Activated CD4-positive, alpha-beta T cell treated with anti-CD3 and anti-CD28 coated beads, Interleukin-2, amount 10 ng/mL, durations not matched to agents 24 days and 14 days (primary cell): ENCODE measurements at regions of chr10 and their contacts with region 1.

Region 1: DNA sequence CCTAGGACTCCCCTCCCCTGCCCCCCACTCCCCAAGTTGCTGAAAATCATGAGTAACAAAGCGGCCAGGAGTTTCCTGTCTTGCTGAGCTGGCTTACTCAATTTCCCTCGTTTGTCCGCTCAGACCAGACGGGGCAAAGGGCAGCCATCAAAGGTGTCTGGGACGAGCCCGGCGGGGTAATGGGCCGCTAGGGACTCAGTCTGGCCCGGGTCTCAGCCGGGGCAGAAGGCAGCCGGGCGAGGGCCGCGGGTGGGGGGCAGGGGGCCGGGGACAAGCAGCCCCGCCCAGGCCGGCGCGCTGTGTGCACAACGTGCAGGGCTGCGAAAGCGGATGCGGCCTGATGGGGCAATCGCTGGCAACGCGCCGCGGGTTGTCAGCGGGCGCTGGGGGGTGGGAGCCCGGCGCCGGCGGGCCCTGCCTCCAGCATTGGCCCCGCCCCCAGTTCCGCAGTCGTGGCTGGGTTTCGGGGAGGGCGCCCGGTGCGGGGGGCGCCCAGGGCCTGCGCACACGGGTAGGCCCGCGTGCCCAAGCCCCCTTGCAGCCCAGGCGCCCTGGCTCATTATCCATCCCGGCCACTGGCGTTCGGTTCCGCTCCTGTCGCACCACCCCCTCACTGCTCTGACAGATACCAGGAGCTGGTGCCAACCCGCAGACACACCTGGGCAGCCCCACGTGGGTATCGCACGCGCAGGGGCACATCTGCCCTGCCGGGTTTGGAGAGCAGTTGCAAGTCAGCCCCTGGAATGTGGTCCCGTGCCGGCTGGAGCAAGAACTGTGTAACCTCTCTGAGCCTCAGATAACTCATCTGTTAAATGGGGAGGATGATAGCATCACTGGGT is 35.1 kb downstream of the DNAJB12 start:
- DNase-seq: peak; percentile 96
- H3K4me3 Mint-ChIP-seq: peak overlapping the region; percentile 85
- H3K27ac Mint-ChIP-seq: peak overlapping the region; percentile 99
- H3K4me1 Mint-ChIP-seq: peaks cover 61% of the 10 kb centered on the region
- H3K27me3 Mint-ChIP-seq: no peaks in the 10 kb centered on the region

Region 2: GRCh38 chr10:71888623-71889387 is 430.8 kb before region 1 on chr10:
- intact Hi-C with region 1: no loop called
- DNase-seq: peak; percentile 90
- H3K4me3 Mint-ChIP-seq: peak overlapping the region; percentile 88
- H3K27ac Mint-ChIP-seq: peak overlapping the region; percentile 76
- H3K4me1 Mint-ChIP-seq: peaks cover 10% of the 10 kb centered on the region
- H3K27me3 Mint-ChIP-seq: peaks cover 15% of the 10 kb centered on the region

Region 3: DNA sequence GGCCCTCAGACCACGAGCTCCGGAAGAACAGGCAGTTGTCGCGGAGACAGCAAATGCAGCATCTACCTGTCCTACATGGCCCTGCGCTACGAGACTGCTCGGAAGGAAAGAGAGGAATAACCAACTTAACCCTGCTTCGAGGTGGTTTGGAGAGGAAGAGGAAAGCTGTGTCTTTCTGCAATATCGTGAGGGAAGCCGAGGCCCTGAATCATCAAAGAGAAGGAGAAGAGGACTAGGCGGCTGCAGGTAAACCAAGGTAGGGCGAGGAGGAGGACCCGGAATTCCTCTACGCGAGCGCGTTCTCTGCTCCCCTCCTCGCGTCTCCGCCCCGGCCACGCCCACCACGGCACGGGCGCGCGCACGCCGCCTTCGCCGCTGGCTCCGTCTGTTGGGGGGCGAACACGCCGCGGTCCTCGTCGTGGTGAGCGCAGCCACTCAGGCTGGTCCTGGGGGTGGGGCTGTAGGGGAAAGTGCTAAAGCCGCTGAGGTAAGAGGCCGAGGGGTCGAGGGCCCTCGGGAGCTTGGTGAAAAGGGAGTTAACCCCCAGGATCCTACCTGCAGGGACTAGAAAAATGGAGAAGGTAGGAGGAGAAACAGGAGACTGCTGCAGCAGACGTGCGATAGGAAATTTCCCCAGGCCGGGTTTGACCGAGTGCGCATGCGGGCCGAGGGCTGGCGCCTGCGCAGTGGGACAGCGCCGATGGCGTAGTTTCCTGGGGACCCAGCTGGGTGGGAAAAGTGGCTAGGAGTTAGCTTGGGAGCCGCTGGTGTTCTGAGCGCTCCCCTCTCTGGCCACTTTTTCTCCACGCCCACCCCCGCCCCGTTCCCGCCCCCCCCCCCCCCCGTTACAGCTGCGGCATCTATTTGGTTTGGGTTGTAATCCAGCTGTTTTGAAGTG is 103.7 kb before region 1 on chr10 and contains the starts of genes ANAPC16 and ASCC1:
- intact Hi-C with region 1: loop called (anchors 5 kb)
- DNase-seq: peak; percentile 99
- H3K4me3 Mint-ChIP-seq: peak within 1 kb of the TSS; percentile 96
- H3K27ac Mint-ChIP-seq: peak within 1 kb of the TSS; percentile 100
- H3K4me1 Mint-ChIP-seq: peaks cover 30% of the 10 kb centered on the region
- H3K27me3 Mint-ChIP-seq: peaks cover 1% of the 10 kb centered on the region
- total RNA-seq, gene ANAPC16: 73.2 and 74.3 TPM in 2 replicates
- total RNA-seq, gene ASCC1: 33.6 and 34.1 TPM in 2 replicates

Region 4: DNA sequence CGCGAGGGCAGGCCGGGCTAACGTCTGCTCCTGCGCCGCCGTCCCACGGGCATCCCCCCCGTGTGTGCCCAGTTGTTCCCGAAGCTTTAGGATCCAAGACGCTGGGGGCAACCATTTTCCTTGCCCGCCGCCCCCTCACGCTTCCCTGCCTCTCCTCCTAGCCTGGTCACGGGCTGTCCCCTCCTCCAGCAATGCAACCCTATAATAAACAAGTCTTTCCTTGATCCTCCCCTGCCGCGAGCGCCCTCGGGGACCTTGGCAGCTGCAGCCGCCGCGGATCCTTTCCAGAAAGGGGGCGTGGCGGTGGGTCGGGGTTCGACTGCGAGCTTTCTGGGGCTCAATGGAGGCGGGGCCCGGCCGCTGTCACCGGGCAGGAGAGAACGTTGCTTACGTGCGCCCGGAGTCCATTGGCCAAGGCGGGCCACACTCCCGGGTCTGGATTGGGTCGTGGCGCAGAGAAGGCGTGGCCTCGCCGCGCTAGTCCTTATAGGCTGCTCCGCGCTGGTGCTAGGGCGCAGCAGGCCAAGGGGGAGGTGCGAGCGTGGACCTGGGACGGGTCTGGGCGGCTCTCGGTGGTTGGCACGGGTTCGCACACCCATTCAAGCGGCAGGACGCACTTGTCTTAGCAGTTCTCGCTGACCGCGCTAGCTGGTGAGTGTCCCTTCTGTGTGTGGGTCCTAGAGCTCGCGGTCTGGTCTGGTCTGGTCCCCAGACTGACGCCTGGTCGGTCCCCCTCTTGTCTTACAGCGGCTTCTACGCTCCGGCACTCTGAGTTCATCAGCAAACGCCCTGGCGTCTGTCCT is 46.0 kb before region 1 on chr10 and contains the start of gene DDIT4:
- intact Hi-C with region 1: loop called (anchors 1 kb)
- DNase-seq: peak; percentile 100
- H3K4me3 Mint-ChIP-seq: peak within 1 kb of the TSS; percentile 96
- H3K27ac Mint-ChIP-seq: peak within 1 kb of the TSS; percentile 92
- H3K4me1 Mint-ChIP-seq: peaks cover 51% of the 10 kb centered on the region
- H3K27me3 Mint-ChIP-seq: no peaks in the 10 kb centered on the region
- total RNA-seq, gene DDIT4: 260 and 271 TPM in 2 replicates

Region 5: DNA sequence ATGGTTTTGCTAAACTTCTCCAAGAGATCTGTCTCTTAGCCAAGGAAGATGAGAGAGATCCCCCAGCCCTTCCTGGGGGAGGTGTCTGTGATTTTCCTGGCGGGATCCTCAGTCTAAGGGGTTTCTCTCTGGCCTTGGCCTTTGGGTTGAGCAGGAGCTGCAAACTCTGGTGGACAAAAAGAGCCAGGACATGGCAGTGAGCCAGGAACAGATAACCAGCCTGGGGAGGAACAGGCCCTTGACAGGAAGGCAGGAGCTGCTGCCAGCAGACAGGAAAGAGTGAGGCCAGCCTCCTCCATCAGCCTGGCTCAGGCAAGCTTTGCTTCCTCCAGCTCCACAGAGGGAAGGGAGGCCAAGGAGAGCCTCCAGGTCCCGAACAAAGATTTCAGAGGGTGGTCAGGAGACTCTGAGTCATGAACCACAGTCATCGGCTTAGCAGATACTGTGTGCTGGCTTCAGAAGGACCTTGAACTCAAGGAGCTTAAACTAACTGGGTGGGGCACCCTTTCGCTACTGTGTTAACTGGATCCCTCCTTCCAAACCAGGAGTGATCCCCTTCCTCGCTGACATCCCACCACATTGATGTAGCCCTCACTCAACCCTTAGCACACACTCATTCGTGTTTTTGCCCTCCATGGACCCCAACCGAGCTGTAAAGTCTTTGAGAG is 11.2 kb before region 1 on chr10:
- intact Hi-C with region 1: loop called (anchors 1 kb)
- DNase-seq: peak; percentile 76
- H3K4me3 Mint-ChIP-seq: no peak overlapping the region
- H3K27ac Mint-ChIP-seq: peak overlapping the region; percentile 87
- H3K4me1 Mint-ChIP-seq: peaks cover 55% of the 10 kb centered on the region
- H3K27me3 Mint-ChIP-seq: no peaks in the 10 kb centered on the region

Region 6: DNA sequence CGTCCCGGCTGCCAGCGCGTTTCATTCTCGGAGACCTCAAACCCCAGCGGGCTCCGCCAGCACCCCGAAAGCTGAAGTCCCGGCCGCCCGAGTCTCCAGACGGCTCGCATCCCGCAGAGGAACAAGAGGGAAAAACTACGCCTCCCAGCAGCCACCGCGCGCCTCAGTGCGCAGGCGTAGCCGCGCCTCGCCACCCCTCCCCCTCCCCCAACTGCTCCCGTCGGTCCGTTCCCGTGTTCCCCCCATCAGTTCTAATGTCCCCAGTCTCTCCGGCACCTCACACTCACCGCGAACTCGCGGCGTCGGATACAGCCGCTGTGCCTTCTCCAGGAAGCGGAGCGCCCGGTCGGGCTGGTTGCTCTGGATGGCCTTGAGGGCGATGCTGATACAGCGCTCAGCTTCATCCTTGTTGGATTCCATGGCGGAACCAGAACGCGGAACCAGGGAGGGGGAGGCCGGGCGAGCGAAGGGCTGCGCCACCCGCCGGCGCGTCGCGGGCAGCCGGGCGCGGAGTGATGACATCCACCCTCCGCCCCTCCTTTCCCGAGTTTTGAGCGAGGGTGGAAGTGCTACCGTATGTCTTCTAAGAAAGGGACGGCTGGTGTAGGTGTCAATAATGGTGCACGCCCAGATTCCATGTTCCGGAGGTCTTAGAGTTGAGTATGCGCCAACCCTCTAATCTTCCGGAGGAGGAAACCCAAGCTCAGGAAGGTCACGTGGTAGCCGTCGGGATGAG is 35.0 kb after region 1 on chr10 and contains the start of gene DNAJB12:
- intact Hi-C with region 1: no loop called
- DNase-seq: peak; percentile 97
- H3K4me3 Mint-ChIP-seq: peak within 1 kb of the TSS; percentile 90
- H3K27ac Mint-ChIP-seq: peak within 1 kb of the TSS; percentile 99
- H3K4me1 Mint-ChIP-seq: peaks cover 26% of the 10 kb centered on the region
- H3K27me3 Mint-ChIP-seq: no peaks in the 10 kb centered on the region
- total RNA-seq, gene DNAJB12: 32.5 and 35.1 TPM in 2 replicates

Region 7: GRCh38 chr10:72490951-72491350 is 171.3 kb after region 1 on chr10:
- intact Hi-C with region 1: no loop called
- DNase-seq: no peak
- H3K4me3 Mint-ChIP-seq: no peak overlapping the region
- H3K27ac Mint-ChIP-seq: no peak overlapping the region
- H3K4me1 Mint-ChIP-seq: no peaks in the 10 kb centered on the region
- H3K27me3 Mint-ChIP-seq: no peaks in the 10 kb centered on the region